Thyroid gland (tissue), 4 donors: ENCODE measurements at regions of chr16 and their contacts with region 1.

Region 1: DNA sequence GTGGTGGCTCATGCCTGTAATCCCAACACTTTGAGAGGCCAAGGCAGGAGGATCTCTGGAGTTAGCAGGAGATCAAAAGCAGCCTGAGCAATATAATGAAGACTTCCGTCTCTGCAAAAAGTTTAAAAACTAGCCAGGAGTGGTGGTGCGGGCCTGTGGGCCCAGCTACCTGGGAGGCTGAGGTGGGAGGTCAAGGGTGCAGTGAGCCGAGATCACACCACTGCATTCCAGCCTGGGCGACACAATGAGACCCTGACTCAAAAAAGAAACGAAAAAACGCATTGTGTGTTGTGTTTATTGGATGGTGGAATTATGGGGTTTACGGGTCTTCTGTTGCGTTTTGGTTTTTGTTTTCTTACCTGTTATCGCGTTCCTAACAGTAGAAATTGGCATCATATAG is 863 bp upstream of the DDX19A start:
- DNase-seq: no peak
- H3K4me3 ChIP-seq: peak overlapping the region in 1 of 3 donors; percentile 64
- H3K27ac ChIP-seq: peak overlapping the region in 1 of 3 donors; percentile 86
- H3K4me1 ChIP-seq: peaks cover 16 to 17% of the 10 kb centered on the region in 2 donors
- H3K27me3 ChIP-seq: no peaks in the 10 kb centered on the region
- CTCF ChIP-seq: no peak
- POLR2A ChIP-seq: no peak

Region 2: GRCh38 chr16:70301121-70301520 is 44.7 kb before region 1 on chr16:
- intact Hi-C with region 1: loop called (anchors 2 kb)
- DNase-seq: no peak
- H3K4me3 ChIP-seq: no peak overlapping the region
- H3K27ac ChIP-seq: no peak overlapping the region
- H3K4me1 ChIP-seq: peaks cover 10 to 20% of the 10 kb centered on the region in 2 donors
- H3K27me3 ChIP-seq: no peaks in the 10 kb centered on the region
- CTCF ChIP-seq: no peak
- POLR2A ChIP-seq: no peak

Region 3: GRCh38 chr16:70395345-70395901 is 49.6 kb after region 1 on chr16:
- intact Hi-C with region 1: no loop called
- DNase-seq: peak; percentile 55 to 65
- H3K4me3 ChIP-seq: no peak overlapping the region
- H3K27ac ChIP-seq: no peak overlapping the region
- H3K4me1 ChIP-seq: no peaks in the 10 kb centered on the region
- H3K27me3 ChIP-seq: no peaks in the 10 kb centered on the region
- CTCF ChIP-seq: peak in 5 of 6 experiments; percentile 44 to 63 (median 55)
- POLR2A ChIP-seq: no peak